ENCODE measurements at regions of chr15 and their contacts with region 1.

Region 1: DNA sequence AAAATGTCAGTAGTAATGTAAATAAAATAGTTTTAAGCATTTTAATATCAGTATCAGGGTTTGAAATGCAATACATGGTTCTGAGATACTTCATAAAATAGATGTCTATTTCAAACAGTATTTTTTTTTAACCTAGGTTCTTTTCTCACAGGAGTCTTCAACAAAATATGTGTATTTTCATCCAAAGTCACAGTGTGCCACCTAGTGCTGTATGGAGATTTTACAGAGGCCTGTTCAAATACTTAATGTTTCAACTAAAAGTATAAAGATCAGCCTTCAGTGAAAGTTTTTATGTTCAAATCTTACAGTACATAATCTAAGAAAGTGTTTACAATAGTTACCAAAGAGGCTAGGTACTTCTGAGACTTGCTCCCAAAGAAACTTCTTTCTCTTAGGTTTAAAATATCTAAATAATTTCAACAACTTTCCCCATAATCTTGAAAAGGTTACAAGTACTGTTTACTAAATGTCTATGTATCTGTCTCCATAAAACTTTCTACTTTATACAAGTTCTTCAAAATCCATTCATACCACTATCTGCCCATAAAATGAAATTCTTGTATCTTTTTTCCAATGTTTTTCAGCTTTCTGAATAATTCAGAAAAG is 38.3 kb downstream of the SCAPER start:
- DNase-seq: no peak
- H3K4me3 Mint-ChIP-seq: no peak overlapping the region
- H3K27ac Mint-ChIP-seq: no peak overlapping the region
- H3K4me1 Mint-ChIP-seq: peaks cover 34% of the 10 kb centered on the region
- H3K27me3 Mint-ChIP-seq: no peaks in the 10 kb centered on the region

Region 2: GRCh38 chr15:76235186-76235826 is 631.5 kb before region 1 on chr15:
- CTCF ChIA-PET with region 1: interaction called, 3 read pairs
- POLR2A ChIA-PET with region 1: no interaction called
- intact Hi-C with region 1: loop called (anchors 10 kb)
- DNase-seq: no peak
- H3K4me3 Mint-ChIP-seq: no peak overlapping the region
- H3K27ac Mint-ChIP-seq: no peak overlapping the region
- H3K4me1 Mint-ChIP-seq: no peaks in the 10 kb centered on the region
- H3K27me3 Mint-ChIP-seq: no peaks in the 10 kb centered on the region

Region 3: DNA sequence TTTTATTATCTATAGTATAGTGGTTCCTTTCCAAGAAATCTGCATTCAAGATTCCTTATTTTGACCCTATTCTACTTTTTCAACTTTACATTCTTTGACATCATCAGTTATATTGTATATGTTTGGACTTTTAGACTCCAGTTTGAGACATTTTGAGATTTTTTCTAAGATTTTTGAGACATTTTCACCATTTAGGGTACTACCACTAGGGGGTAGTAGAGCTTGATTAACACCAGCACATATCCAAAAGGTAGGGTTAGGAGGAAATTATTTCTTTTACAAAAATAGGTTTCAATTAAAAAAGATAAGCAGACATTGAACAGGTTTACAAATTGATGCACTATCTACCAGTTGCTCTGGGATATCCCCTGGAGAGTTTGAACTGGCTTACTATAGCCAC is 224.1 kb before region 1 on chr15:
- CTCF ChIA-PET with region 1: interaction called, 12 read pairs
- POLR2A ChIA-PET with region 1: no interaction called
- intact Hi-C with region 1: no loop called
- DNase-seq: no peak
- H3K4me3 Mint-ChIP-seq: no peak overlapping the region
- H3K27ac Mint-ChIP-seq: no peak overlapping the region
- H3K4me1 Mint-ChIP-seq: no peaks in the 10 kb centered on the region
- H3K27me3 Mint-ChIP-seq: no peaks in the 10 kb centered on the region

Region 4: DNA sequence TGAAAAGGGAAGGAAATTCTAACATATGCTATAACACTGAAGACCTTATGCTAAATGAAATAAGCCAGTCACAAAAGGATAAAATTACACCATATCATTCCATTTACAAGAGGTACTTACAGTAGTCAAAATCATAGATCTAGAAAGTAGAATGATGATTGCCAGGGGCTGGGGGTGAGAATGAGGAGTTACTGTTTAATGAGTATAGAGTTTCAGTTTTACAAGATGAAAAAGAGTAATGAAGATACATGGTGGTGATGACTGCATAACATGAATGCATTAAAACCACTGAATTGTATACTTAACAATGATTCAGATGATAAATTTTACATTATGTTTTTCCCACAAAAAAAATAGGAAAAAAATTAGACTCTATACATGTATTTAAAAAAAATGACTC is 114.3 kb before region 1 on chr15:
- CTCF ChIA-PET with region 1: no interaction called
- POLR2A ChIA-PET with region 1: no interaction called
- intact Hi-C with region 1: loop called (anchors 2 kb)
- DNase-seq: peak; percentile 37
- H3K4me3 Mint-ChIP-seq: no peak overlapping the region
- H3K27ac Mint-ChIP-seq: no peak overlapping the region
- H3K4me1 Mint-ChIP-seq: peaks cover 11% of the 10 kb centered on the region
- H3K27me3 Mint-ChIP-seq: no peaks in the 10 kb centered on the region